CD4-positive, alpha-beta memory T cell (primary cell): ENCODE measurements at regions of chr2 and their contacts with region 1.

Region 1: GRCh38 chr2:86440631-86441391 is at the start of gene KDM3A:
- DNase-seq: peak; percentile 99 to 100 (median 99)
- H3K4me3 ChIP-seq: peak within 1 kb of the TSS; percentile 94 to 95
- H3K4me3 Mint-ChIP-seq: peak within 1 kb of the TSS; percentile 95 to 99 (median 98)
- H3K27ac ChIP-seq: peak within 1 kb of the TSS; percentile 83
- H3K27ac Mint-ChIP-seq: peak within 1 kb of the TSS; percentile 98 to 100 (median 99)
- H3K4me1 ChIP-seq: peaks cover 37% of the 10 kb centered on the region
- H3K4me1 Mint-ChIP-seq: peaks cover 37 to 51% (median 45%) of the 10 kb centered on the region in 4 donors
- H3K27me3 ChIP-seq: no peaks in the 10 kb centered on the region
- H3K27me3 Mint-ChIP-seq: peaks cover 2 to 9% of the 10 kb centered on the region in 2 donors
- total RNA-seq, gene KDM3A: 158 to 164 TPM

Region 2: GRCh38 chr2:85437488-85438284 is 1003.1 kb before region 1 on chr2:
- CTCF ChIA-PET with region 1: no interaction called
- POLR2A ChIA-PET with region 1: no interaction called
- intact Hi-C with region 1: no loop called
- DNase-seq: peak; percentile 77 to 88 (median 81)
- H3K4me3 ChIP-seq: peak overlapping the region; percentile 36 to 52
- H3K4me3 Mint-ChIP-seq: peak overlapping the region; percentile 87 to 95 (median 91)
- H3K27ac ChIP-seq: peak overlapping the region; percentile 75
- H3K27ac Mint-ChIP-seq: peak overlapping the region; percentile 88 to 99 (median 98)
- H3K4me1 ChIP-seq: peaks cover 30% of the 10 kb centered on the region
- H3K4me1 Mint-ChIP-seq: peaks cover 9 to 38% (median 25%) of the 10 kb centered on the region in 4 donors
- H3K27me3 ChIP-seq: no peaks in the 10 kb centered on the region
- H3K27me3 Mint-ChIP-seq: no peaks in the 10 kb centered on the region

Region 3: DNA sequence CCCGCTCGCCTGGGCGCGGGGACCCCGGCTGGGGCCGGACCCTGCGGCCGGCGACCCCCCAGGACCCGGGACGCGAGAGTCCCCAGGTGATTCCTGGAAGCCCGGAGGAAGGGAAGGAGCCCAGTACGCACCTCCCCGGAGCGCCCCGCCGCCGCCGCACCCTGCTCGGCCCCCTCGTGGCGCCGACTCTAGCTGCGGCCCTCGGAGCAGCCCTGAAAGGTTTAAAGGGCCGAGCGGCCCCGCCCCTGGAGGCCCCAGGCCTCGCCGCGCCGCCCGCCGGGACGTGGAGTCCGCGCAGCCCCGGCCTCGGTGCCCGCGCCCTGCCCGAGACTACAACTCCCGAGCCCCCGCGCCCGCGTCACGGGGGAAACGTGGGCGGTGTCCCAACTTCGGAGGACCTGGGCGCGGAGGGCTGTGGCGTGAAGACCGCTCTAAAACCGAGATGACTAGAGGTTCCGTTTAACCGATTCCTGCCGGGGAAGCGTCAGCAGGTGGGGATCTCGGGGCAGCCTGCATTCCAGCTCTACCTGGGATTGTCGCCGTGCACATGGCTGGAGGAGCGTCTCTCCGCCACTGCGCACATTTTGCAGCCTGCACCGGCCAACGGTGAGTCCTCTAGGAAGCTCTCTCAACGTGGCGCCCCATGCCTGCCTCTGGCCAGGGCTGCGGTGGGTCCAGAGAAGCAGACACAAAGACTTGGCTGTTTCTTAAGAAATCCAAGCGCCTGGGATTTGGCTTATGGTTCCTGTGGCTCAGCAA is 838.2 kb before region 1 on chr2 and contains the start of gene TMEM150A:
- CTCF ChIA-PET with region 1: no interaction called
- POLR2A ChIA-PET with region 1: no interaction called
- intact Hi-C with region 1: loop called (anchors 5 kb)
- DNase-seq: peak; percentile 81 to 85 (median 82)
- H3K4me3 ChIP-seq: peak within 1 kb of the TSS; percentile 66 to 95
- H3K4me3 Mint-ChIP-seq: peak within 1 kb of the TSS; percentile 88 to 94 (median 90)
- H3K27ac ChIP-seq: peak within 1 kb of the TSS; percentile 62
- H3K27ac Mint-ChIP-seq: peak within 1 kb of the TSS; percentile 82 to 96 (median 90)
- H3K4me1 ChIP-seq: peaks cover 28% of the 10 kb centered on the region
- H3K4me1 Mint-ChIP-seq: peaks cover 14 to 49% (median 34%) of the 10 kb centered on the region in 4 donors
- H3K27me3 ChIP-seq: no peaks in the 10 kb centered on the region
- H3K27me3 Mint-ChIP-seq: no peaks in the 10 kb centered on the region
- total RNA-seq, gene TMEM150A: 13.3 to 14.3 TPM

Region 4: GRCh38 chr2:86185517-86186212 is 255.1 kb before region 1 on chr2:
- CTCF ChIA-PET with region 1: no interaction called
- POLR2A ChIA-PET with region 1: interaction called, 26 read pairs
- intact Hi-C with region 1: no loop called
- DNase-seq: peak; percentile 47 to 68 (median 56)
- H3K4me3 ChIP-seq: peak overlapping the region in 1 of 2 donors; percentile 12
- H3K4me3 Mint-ChIP-seq: peak overlapping the region; percentile 43 to 85 (median 78)
- H3K27ac ChIP-seq: peak overlapping the region; percentile 54
- H3K27ac Mint-ChIP-seq: peak overlapping the region; percentile 82 to 98 (median 92)
- H3K4me1 ChIP-seq: peaks cover 85% of the 10 kb centered on the region
- H3K4me1 Mint-ChIP-seq: peaks cover 53 to 79% (median 62%) of the 10 kb centered on the region in 4 donors
- H3K27me3 ChIP-seq: no peaks in the 10 kb centered on the region
- H3K27me3 Mint-ChIP-seq: no peaks in the 10 kb centered on the region

Region 5: DNA sequence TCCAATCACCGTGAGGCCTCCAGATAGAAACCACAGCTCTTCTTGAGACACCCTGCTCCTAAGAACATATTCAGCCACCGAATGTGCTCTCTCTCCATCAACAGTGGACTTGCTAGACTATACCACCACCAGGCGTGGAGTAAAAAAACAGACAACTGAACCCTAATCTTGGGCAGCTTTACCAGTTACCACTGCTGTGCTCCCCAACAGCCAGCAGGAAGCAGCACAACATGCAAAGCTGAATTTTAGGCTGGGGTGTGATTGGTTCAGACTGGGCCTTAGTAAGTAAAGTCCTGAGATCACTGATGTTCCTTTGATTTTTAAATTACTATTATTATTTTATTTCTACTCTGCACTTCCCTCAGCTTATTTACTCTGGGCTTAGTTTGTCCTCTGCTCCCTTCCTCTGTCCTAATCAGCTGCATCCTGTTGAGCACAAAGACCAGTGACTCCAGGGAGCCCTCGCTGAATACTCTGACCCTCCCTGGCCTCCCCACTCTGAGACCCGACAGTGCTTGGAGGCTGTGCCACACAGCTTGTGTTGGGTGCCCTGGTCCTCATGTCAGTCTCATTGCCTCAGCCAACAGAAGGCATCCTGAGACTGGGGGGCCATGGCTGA is 219.6 kb before region 1 on chr2:
- CTCF ChIA-PET with region 1: interaction called, 10 read pairs
- POLR2A ChIA-PET with region 1: interaction called, 13 read pairs
- intact Hi-C with region 1: loop called (anchors 10 kb)
- DNase-seq: peak in 4 of 5 donors; percentile 32 to 52 (median 41)
- H3K4me3 ChIP-seq: no peak overlapping the region
- H3K4me3 Mint-ChIP-seq: no peak overlapping the region
- H3K27ac ChIP-seq: no peak overlapping the region
- H3K27ac Mint-ChIP-seq: peak overlapping the region in 2 of 7 donors; percentile 8 to 67
- H3K4me1 ChIP-seq: peaks cover 4% of the 10 kb centered on the region
- H3K4me1 Mint-ChIP-seq: peaks cover 0 to 19% (median 8%) of the 10 kb centered on the region in 4 donors
- H3K27me3 ChIP-seq: no peaks in the 10 kb centered on the region
- H3K27me3 Mint-ChIP-seq: no peaks in the 10 kb centered on the region

Region 6: GRCh38 chr2:86352137-86352726 is 88.6 kb before region 1 on chr2:
- CTCF ChIA-PET with region 1: no interaction called
- POLR2A ChIA-PET with region 1: no interaction called
- intact Hi-C with region 1: no loop called
- DNase-seq: no peak
- H3K4me3 ChIP-seq: no peak overlapping the region
- H3K4me3 Mint-ChIP-seq: no peak overlapping the region
- H3K27ac ChIP-seq: no peak overlapping the region
- H3K27ac Mint-ChIP-seq: no peak overlapping the region
- H3K4me1 ChIP-seq: no peaks in the 10 kb centered on the region
- H3K4me1 Mint-ChIP-seq: no peaks in the 10 kb centered on the region
- H3K27me3 ChIP-seq: no peaks in the 10 kb centered on the region
- H3K27me3 Mint-ChIP-seq: peaks cover 16 to 22% of the 10 kb centered on the region in 2 donors

Region 7: GRCh38 chr2:86453836-86454235 is 13.0 kb after region 1 on chr2:
- CTCF ChIA-PET with region 1: interaction called, 4 read pairs
- POLR2A ChIA-PET with region 1: interaction called, 28 read pairs
- intact Hi-C with region 1: no loop called
- DNase-seq: no peak
- H3K4me3 ChIP-seq: no peak overlapping the region
- H3K4me3 Mint-ChIP-seq: no peak overlapping the region
- H3K27ac ChIP-seq: no peak overlapping the region
- H3K27ac Mint-ChIP-seq: no peak overlapping the region
- H3K4me1 ChIP-seq: peaks cover 8% of the 10 kb centered on the region
- H3K4me1 Mint-ChIP-seq: peaks cover 21 to 31% (median 29%) of the 10 kb centered on the region in 4 donors
- H3K27me3 ChIP-seq: no peaks in the 10 kb centered on the region
- H3K27me3 Mint-ChIP-seq: no peaks in the 10 kb centered on the region

Region 8: GRCh38 chr2:86525421-86526340 is 84.9 kb after region 1 on chr2:
- CTCF ChIA-PET with region 1: no interaction called
- POLR2A ChIA-PET with region 1: no interaction called
- intact Hi-C with region 1: no loop called
- DNase-seq: no peak
- H3K4me3 ChIP-seq: no peak overlapping the region
- H3K4me3 Mint-ChIP-seq: no peak overlapping the region
- H3K27ac ChIP-seq: no peak overlapping the region
- H3K27ac Mint-ChIP-seq: no peak overlapping the region
- H3K4me1 ChIP-seq: no peaks in the 10 kb centered on the region
- H3K4me1 Mint-ChIP-seq: peaks cover 0 to 6% (median 4%) of the 10 kb centered on the region in 4 donors
- H3K27me3 ChIP-seq: no peaks in the 10 kb centered on the region
- H3K27me3 Mint-ChIP-seq: no peaks in the 10 kb centered on the region

Region 9: GRCh38 chr2:86584151-86584913 is 143.5 kb after region 1 on chr2:
- CTCF ChIA-PET with region 1: no interaction called
- POLR2A ChIA-PET with region 1: interaction called, 14 read pairs
- intact Hi-C with region 1: no loop called
- DNase-seq: peak; percentile 26 to 48 (median 35)
- H3K4me3 ChIP-seq: no peak overlapping the region
- H3K4me3 Mint-ChIP-seq: peak overlapping the region in 6 of 8 donors; percentile 31 to 74 (median 59)
- H3K27ac ChIP-seq: no peak overlapping the region
- H3K27ac Mint-ChIP-seq: peak overlapping the region; percentile 73 to 95 (median 84)
- H3K4me1 ChIP-seq: peaks cover 24% of the 10 kb centered on the region
- H3K4me1 Mint-ChIP-seq: peaks cover 17 to 28% (median 22%) of the 10 kb centered on the region in 4 donors
- H3K27me3 ChIP-seq: no peaks in the 10 kb centered on the region
- H3K27me3 Mint-ChIP-seq: peaks cover 0 to 1% of the 10 kb centered on the region in 2 donors